ENCODE measurements at regions of chr2 and their contacts with region 1.

Region 1: DNA sequence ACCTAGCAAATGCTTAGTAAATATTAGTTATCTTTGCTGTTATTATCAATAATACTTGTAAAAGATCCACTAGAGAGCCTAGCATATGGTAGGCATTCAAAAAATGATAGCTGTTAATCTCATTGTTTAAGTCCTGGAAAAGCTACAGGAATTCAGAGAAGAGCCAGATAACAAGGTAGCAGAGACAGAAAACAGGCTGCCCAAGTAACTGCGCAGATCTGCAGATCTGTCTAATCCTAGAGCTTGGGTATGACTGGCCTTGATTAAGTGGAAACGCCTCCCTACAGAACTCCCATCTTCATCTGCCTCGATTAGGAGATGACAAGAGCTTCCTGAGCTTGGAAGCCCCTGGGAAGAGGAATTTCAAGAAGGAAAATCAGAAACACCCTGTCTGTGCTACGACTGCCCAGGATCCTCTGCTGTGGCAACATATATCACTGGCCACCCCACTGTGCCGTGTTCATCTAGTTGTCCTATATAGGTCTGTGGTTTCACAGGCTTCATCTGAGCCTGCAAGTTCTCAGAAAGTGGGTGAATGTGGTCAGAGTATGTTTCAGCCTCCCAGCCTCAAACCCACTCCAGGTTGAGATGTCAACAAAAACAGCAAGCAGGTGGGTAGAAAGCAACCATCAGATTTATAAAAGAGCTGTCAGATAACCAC is 151.5 kb upstream of the PKDCC start:
- DNase-seq: no peak
- H3K4me3 ChIP-seq: no peak overlapping the region
- H3K27ac ChIP-seq: peak overlapping the region; percentile 71 to 82
- H3K4me1 ChIP-seq: peaks cover 6 to 32% of the 10 kb centered on the region in 2 donors
- H3K27me3 ChIP-seq: no peaks in the 10 kb centered on the region
- CTCF ChIP-seq: no peak

Region 2: DNA sequence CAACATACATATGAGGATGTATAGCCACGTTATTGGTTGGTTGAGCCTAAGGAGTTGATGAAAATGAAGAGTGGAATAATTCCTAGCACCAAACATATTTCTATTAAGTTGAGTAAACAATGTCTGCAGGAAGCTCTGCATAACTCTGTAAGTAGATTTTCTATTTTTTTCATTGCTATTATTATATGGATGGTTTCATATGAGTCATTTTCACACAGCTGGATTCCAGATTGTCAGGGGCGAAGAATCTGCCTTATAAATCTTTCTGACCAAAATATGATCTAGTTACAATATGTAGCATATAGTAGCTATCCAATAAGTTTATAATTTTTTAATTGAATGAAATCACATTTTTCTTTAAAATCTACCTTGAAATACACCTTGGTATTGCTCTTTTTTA is 316.5 kb before region 1 on chr2:
- intact Hi-C with region 1: no loop called
- DNase-seq: no peak
- H3K4me3 ChIP-seq: no peak overlapping the region
- H3K27ac ChIP-seq: no peak overlapping the region
- H3K4me1 ChIP-seq: no peaks in the 10 kb centered on the region
- H3K27me3 ChIP-seq: no peaks in the 10 kb centered on the region
- CTCF ChIP-seq: no peak

Region 3: GRCh38 chr2:41940770-41941113 is 44.4 kb after region 1 on chr2:
- intact Hi-C with region 1: loop called (anchors 5 kb)
- DNase-seq: no peak
- H3K4me3 ChIP-seq: no peak overlapping the region
- H3K27ac ChIP-seq: peak overlapping the region; percentile 54 to 76
- H3K4me1 ChIP-seq: peaks cover 5 to 26% of the 10 kb centered on the region in 2 donors
- H3K27me3 ChIP-seq: no peaks in the 10 kb centered on the region
- CTCF ChIP-seq: no peak

Measured in ascending aorta (tissue), 2 donors.